GM13977 (cell line): ENCODE measurements at regions of chr21 and their contacts with region 1.

Region 1: DNA sequence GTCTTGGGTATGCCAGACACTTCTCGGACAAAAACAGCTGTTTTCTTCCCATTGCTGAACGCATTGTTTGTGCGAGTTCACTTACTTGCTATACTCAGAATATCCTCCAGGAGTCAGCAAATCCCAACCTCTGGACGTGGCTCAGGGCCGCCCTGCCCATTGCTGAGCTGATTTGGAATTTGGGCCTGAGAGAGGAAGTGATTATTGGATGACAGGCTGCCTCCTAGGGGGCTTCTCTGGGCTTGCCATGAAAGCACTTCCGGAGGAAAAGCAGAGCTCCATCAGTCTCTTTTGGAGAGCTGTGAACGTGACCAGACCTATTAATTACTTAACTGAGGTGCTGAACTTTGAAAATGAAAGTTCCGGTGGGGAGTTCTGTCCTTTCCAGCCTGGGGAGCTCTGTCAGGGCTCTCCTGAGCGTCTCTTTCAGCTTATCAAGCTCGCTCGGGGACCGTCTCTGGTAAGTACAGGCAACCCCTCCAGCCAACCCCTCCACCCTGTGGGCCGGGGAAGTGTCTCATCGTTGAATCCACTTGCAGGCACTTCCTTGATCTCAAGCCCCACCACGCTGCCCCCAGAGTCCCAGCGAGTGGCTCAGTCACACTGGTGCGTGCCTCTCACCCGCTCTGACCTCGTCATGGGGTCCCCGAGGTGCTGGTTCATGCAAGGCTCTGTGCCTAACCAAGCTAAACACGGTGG is 76.9 kb downstream of the CLIC6 start:
- DNase-seq: peak; percentile 70
- CTCF ChIP-seq: peak; percentile 84

Region 2: DNA sequence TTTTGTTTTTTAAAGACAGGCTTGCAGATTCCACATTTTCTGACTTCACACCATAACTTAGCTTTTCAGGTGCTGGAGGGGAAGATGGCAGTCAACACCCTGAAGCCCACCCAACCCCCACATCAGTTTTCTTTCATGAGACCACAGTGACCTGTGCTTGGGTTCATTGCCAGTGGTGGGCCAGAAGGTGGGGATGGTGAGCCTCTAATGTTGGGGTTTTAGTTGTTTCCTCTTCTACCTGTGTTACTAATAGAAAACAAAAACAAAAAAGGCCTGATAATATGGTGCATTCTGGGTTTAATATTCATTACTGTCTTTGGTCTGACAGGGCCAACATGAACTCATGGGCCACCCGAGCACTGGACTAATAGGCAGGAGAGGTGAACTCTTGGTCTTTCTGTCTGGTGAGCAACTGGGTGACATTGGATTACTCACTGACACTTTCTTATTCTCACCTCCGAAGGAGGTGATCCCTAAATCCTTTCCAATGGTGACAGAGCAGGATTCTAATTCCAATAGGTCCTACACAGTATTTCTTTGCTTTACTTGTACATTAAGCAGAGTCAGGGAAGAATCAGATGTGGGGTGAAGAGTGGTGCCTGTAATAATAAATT is 55.9 kb after region 1 on chr21:
- in situ Hi-C with region 1: no loop called
- DNase-seq: peak; percentile 65
- CTCF ChIP-seq: peak; percentile 70

Region 3: DNA sequence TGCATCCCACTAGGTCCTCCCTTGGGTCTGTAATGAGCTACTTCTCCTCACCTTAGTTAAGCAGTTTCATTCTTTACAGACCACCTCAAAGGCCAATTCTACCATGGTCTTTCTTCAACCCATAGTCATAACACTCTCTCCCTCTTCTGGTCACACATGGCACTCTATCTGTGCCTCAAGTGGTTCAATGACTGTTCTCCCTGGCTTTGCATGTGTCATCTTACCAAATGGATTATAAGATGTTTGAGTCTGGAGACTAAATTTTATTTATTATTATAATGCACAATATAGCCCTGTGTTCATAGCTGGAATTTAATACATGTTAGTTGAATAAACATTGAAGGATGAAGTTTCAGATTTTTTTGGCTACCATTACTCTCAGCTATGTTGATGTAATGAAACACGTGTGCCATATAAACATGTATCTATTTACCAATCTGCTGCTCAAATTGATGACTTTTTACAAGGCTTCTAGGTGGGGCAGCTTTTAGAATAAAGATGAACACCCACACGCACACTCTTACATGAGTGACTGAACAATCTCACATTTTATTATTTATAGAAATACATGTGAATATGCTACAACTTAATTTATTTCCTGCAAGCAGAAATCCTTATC is 201.3 kb after region 1 on chr21:
- in situ Hi-C with region 1: no loop called
- DNase-seq: no peak
- CTCF ChIP-seq: peak; percentile 6

Region 4: GRCh38 chr21:35840197-35840799 is 1094.6 kb after region 1 on chr21:
- in situ Hi-C with region 1: loop called (anchors 25 kb)
- DNase-seq: peak; percentile 43
- CTCF ChIP-seq: peak; percentile 73

Region 5: DNA sequence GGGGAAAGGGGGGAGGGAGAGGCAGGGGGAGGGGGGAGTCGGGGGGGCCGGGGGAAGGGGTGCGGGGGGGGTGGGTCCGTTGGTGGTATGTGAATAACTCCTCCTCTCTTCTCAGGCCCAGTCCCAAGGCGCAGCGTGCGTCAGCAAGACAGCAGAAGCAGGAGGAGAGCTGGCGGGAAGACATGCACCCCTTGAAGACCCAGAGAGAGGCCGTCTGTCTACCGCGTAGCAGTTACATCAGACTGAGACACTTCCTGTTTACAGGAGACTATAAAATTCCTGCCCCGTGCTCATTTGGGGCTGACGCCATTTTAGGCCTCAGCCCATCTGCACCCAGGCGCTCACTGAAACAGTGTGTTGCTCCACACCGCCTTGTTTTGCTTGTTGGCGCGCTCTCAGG is 1259.3 kb after region 1 on chr21:
- in situ Hi-C with region 1: loop called (anchors 25 kb)
- DNase-seq: no peak
- CTCF ChIP-seq: no peak